Mammary epithelial cell (primary cell): ENCODE measurements at regions of chr4 and their contacts with region 1.

Region 1: GRCh38 chr4:18934197-18934596 is 912.6 kb upstream of the LCORL start:
- DNase-seq: peak; percentile 2
- H3K4me3 ChIP-seq: no peak overlapping the region
- H3K27ac ChIP-seq: no peak overlapping the region
- H3K4me1 ChIP-seq: no peaks in the 10 kb centered on the region
- H3K27me3 ChIP-seq: no peaks in the 10 kb centered on the region
- CTCF ChIP-seq: peak; percentile 17 to 45

Region 2: GRCh38 chr4:18689308-18690115 is 244.7 kb before region 1 on chr4:
- CTCF ChIA-PET with region 1: no interaction called
- dilution Hi-C with region 1: no loop called
- in situ Hi-C with region 1: loop called (anchors 5 to 10 kb)
- intact Hi-C with region 1: loop called (anchors 1 kb)
- DNase-seq: peak; percentile 28
- H3K4me3 ChIP-seq: no peak overlapping the region
- H3K27ac ChIP-seq: no peak overlapping the region
- H3K4me1 ChIP-seq: no peaks in the 10 kb centered on the region
- H3K27me3 ChIP-seq: no peaks in the 10 kb centered on the region
- CTCF ChIP-seq: peak; percentile 79 to 83

Region 3: DNA sequence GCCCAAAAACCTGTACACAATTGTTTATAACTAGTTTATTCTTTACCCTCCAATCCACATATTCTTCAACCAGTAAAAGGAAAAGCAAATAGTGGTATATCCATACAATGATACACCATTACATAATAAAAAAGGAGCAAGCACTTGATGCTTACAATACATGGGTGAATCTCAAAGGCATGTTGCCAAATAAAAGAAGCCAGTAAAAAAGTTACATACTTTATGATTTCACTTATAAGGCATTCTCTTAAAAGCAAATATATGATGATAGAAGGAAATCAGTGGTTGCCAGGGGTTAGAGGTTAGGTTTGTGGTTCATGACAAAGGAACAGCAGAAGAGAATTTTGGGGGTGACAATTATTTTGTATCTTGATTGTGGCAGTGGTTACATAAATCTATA is 16.5 kb before region 1 on chr4:
- CTCF ChIA-PET with region 1: interaction called, 21 read pairs
- dilution Hi-C with region 1: no loop called
- in situ Hi-C with region 1: no loop called
- intact Hi-C with region 1: no loop called
- DNase-seq: peak; percentile 35
- H3K4me3 ChIP-seq: no peak overlapping the region
- H3K27ac ChIP-seq: no peak overlapping the region
- H3K4me1 ChIP-seq: peaks cover 10% of the 10 kb centered on the region
- H3K27me3 ChIP-seq: no peaks in the 10 kb centered on the region
- CTCF ChIP-seq: no peak

Region 4: GRCh38 chr4:19010761-19011160 is 76.6 kb after region 1 on chr4:
- CTCF ChIA-PET with region 1: no interaction called
- dilution Hi-C with region 1: no loop called
- in situ Hi-C with region 1: no loop called
- intact Hi-C with region 1: no loop called
- DNase-seq: no peak
- H3K4me3 ChIP-seq: no peak overlapping the region
- H3K27ac ChIP-seq: no peak overlapping the region
- H3K4me1 ChIP-seq: no peaks in the 10 kb centered on the region
- H3K27me3 ChIP-seq: no peaks in the 10 kb centered on the region
- CTCF ChIP-seq: no peak

Region 5: DNA sequence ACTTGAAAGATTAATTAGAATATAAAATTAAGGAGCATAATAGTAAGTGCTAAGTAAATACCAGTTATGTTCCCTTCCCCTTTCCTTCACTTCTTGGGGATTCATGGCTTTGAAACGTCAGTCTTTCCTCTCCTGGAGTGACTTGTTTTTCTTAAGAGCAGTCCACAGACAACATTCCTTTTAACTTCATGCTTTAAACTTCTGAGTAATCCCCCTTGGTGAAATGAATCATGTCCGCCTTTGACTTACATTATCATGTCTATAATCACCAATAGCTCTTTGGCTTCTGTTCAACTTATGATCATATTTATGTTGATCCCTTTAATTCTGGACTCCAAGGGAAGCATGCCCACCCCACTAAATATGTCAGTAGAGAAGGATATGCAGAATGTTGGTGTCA is 305.4 kb after region 1 on chr4:
- CTCF ChIA-PET with region 1: no interaction called
- dilution Hi-C with region 1: no loop called
- in situ Hi-C with region 1: no loop called
- intact Hi-C with region 1: no loop called
- DNase-seq: peak; percentile 52
- H3K4me3 ChIP-seq: no peak overlapping the region
- H3K27ac ChIP-seq: no peak overlapping the region
- H3K4me1 ChIP-seq: no peaks in the 10 kb centered on the region
- H3K27me3 ChIP-seq: no peaks in the 10 kb centered on the region
- CTCF ChIP-seq: no peak